Right lobe of liver (tissue), 6 donors: ENCODE measurements at regions of chr17 and their contacts with region 1.

Region 1: DNA sequence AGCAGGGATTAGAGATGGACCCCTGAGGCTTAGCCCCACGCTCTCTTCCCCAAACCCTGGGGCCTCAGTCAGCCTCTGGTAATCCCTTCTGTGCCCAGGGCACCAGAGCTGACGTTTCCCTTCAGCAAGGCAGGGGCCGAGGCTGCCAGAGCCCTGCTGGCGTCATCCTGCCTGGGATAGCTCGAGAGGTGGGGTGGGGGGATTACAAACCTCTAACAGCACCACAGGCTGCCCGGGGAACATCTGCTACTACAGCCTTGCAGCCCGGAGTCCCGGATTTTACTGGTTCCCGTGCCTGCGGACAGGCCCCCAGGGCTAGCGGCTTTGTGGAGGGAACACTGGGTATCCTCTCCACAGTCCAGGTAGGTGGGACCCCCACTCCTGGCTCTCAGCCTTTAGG is at the start of gene AANAT:
- DNase-seq: peak in 1 of 3 donors; percentile 41
- ATAC-seq: no peak
- H3K4me3 ChIP-seq: no peak within 1 kb of the TSS
- H3K27ac ChIP-seq: no peak within 1 kb of the TSS
- H3K4me1 ChIP-seq: no peaks in the 10 kb centered on the region
- H3K27me3 ChIP-seq: no peaks in the 10 kb centered on the region
- CTCF ChIP-seq: no peak
- POLR2A ChIP-seq: no peak
- total RNA-seq, gene AANAT: not detected

Region 2: GRCh38 chr17:76506408-76507349 is 39.3 kb after region 1 on chr17:
- intact Hi-C with region 1: loop called (anchors 5 kb)
- DNase-seq: peak; percentile 81 to 87 (median 82)
- ATAC-seq: peak; percentile 84 to 90 (median 86)
- H3K4me3 ChIP-seq: no peak overlapping the region
- H3K27ac ChIP-seq: no peak overlapping the region
- H3K4me1 ChIP-seq: peaks cover 0 to 8% (median 0%) of the 10 kb centered on the region in 4 donors
- H3K27me3 ChIP-seq: no peaks in the 10 kb centered on the region
- CTCF ChIP-seq: peak; percentile 94 to 96 (median 95)
- POLR2A ChIP-seq: no peak